ENCODE measurements at regions of chr13 and their contacts with region 1.

Region 1: DNA sequence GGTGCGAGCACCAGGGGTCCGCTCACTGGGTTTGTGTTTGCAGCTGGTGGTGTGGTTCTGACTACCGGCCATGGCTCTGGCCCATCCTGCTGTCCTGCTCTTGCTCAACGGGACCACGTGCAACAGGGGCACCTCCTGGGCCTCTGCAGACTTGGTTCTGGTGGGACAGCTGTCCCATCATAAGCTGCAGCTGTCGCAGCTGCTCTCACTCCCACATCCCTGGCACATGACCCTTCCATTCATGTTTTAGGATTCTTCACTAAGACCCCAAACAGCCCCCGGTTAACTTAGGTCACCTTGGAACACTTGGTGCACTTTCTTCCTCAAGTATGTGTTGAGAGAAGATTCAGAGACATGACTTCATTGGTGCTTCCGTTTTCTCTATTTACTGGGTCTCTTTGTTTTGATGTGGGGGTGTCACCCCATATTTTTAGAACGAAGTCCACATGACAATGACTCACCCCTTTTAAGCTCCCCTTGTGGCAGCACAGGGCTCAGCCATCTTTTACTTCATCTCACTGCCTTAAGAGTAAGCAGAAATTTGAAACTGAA is 68.4 kb upstream of the ARHGEF7 start:
- DNase-seq: peak in 1 of 2 donors; percentile 70
- ATAC-seq: peak; percentile 67 to 82
- H3K4me3 ChIP-seq: no peak overlapping the region
- H3K27ac ChIP-seq: peak overlapping the region; percentile 54 to 83 (median 66)
- H3K4me1 ChIP-seq: peaks cover 0 to 15% of the 10 kb centered on the region in 2 donors
- H3K27me3 ChIP-seq: no peaks in the 10 kb centered on the region
- CTCF ChIP-seq: peak in 3 of 5 experiments; percentile 27 to 31 (median 30)
- POLR2A ChIP-seq: peak in 1 of 2 donors; percentile 25

Region 2: GRCh38 chr13:110869805-110870706 is 176.6 kb before region 1 on chr13:
- in situ Hi-C with region 1: no loop called
- intact Hi-C with region 1: loop called (anchors 5 kb)
- DNase-seq: peak; percentile 96 to 98
- ATAC-seq: peak; percentile 87 to 88
- H3K4me3 ChIP-seq: peak overlapping the region; percentile 70 to 82 (median 77)
- H3K27ac ChIP-seq: peak overlapping the region; percentile 98 to 99 (median 99)
- H3K4me1 ChIP-seq: peaks cover 42% of the 10 kb centered on the region in 2 donors
- H3K27me3 ChIP-seq: no peaks in the 10 kb centered on the region
- CTCF ChIP-seq: peak; percentile 13 to 53 (median 26)
- POLR2A ChIP-seq: peak; percentile 49 to 80

Region 3: GRCh38 chr13:110944121-110944967 is 102.3 kb before region 1 on chr13:
- in situ Hi-C with region 1: loop called in 2 of 4 experiments (anchors 10 kb)
- intact Hi-C with region 1: loop called (anchors 1 kb)
- DNase-seq: peak in 1 of 2 donors; percentile 39
- ATAC-seq: peak; percentile 82 to 86
- H3K4me3 ChIP-seq: no peak overlapping the region
- H3K27ac ChIP-seq: peak overlapping the region in 2 of 4 donors; percentile 27 to 37
- H3K4me1 ChIP-seq: peaks cover 4 to 6% of the 10 kb centered on the region in 2 donors
- H3K27me3 ChIP-seq: no peaks in the 10 kb centered on the region
- CTCF ChIP-seq: peak; percentile 36 to 81 (median 70)
- POLR2A ChIP-seq: no peak

Region 4: GRCh38 chr13:111017755-111018459 is 28.8 kb before region 1 on chr13:
- in situ Hi-C with region 1: no loop called
- intact Hi-C with region 1: no loop called
- DNase-seq: no peak
- ATAC-seq: no peak
- H3K4me3 ChIP-seq: no peak overlapping the region
- H3K27ac ChIP-seq: no peak overlapping the region
- H3K4me1 ChIP-seq: no peaks in the 10 kb centered on the region
- H3K27me3 ChIP-seq: no peaks in the 10 kb centered on the region
- CTCF ChIP-seq: no peak
- POLR2A ChIP-seq: no peak

Region 5: DNA sequence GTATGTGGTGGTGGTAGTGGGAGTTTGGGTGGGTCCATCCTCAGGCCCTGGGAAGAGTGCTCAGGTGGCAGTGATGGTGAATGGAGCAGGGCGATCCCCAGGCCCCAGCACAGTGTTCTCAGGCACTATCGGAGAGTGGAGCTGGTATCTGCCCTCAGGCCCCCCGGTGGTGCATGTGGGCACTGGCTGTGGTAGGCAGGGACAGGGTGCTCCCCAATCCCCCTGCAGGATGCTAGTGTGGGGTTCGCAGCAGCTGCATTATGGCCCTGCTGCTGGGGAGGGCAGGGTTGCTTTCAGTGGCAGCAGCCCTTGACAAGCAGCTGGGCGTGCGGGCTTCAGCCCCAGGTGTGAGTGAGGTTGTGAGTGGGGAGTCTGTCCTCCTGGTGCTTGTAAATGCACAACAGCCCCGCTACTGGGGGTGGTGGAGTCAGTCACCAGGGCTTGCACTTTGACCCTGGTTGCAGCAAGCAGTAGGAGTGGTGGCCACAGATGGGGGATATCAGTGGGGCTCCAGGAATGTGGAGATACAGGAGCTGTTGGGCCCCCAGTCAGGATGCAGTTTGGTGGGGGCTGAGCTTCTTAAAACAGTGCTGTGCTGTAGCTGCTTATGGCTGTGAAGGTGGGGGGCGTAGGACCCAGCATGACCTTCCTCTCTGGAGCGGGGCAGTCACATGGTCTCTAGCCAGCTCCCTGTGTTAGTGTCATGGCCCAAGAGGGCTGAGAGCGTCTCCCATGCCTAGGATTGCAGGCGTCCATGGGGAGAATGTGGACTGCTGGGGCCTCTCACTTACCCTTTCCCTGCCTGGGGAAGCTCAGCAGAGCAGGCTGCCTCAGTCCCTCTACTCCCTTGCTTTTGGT is 29.7 kb after region 1 on chr13:
- in situ Hi-C with region 1: no loop called
- intact Hi-C with region 1: no loop called
- DNase-seq: no peak
- ATAC-seq: no peak
- H3K4me3 ChIP-seq: no peak overlapping the region
- H3K27ac ChIP-seq: no peak overlapping the region
- H3K4me1 ChIP-seq: no peaks in the 10 kb centered on the region
- H3K27me3 ChIP-seq: no peaks in the 10 kb centered on the region
- CTCF ChIP-seq: no peak
- POLR2A ChIP-seq: no peak